Common myeloid progenitor, CD34-positive (primary cell): ENCODE measurements at regions of chr20 and their contacts with region 1.

Region 1: GRCh38 chr20:53656293-53657202 is 62.9 kb upstream of the ZNF217 start:
- DNase-seq: peak in 2 of 3 donors; percentile 44 to 46
- H3K4me3 ChIP-seq: no peak overlapping the region
- H3K27ac ChIP-seq: no peak overlapping the region
- H3K4me1 ChIP-seq: peaks cover 47 to 79% (median 62%) of the 10 kb centered on the region in 4 experiments
- H3K27me3 ChIP-seq: no peaks in the 10 kb centered on the region

Region 2: GRCh38 chr20:53677447-53678314 is 21.1 kb after region 1 on chr20:
- CTCF ChIA-PET with region 1: interaction called, 11 read pairs
- POLR2A ChIA-PET with region 1: no interaction called
- DNase-seq: peak; percentile 56 to 68 (median 65)
- H3K4me3 ChIP-seq: peak overlapping the region in 6 of 7 experiments; percentile 6 to 68 (median 31)
- H3K27ac ChIP-seq: peak overlapping the region; percentile 12 to 75
- H3K4me1 ChIP-seq: peaks cover 13 to 46% (median 25%) of the 10 kb centered on the region in 4 experiments
- H3K27me3 ChIP-seq: no peaks in the 10 kb centered on the region